ENCODE measurements at regions of chr19 and their contacts with region 1.

Region 1: DNA sequence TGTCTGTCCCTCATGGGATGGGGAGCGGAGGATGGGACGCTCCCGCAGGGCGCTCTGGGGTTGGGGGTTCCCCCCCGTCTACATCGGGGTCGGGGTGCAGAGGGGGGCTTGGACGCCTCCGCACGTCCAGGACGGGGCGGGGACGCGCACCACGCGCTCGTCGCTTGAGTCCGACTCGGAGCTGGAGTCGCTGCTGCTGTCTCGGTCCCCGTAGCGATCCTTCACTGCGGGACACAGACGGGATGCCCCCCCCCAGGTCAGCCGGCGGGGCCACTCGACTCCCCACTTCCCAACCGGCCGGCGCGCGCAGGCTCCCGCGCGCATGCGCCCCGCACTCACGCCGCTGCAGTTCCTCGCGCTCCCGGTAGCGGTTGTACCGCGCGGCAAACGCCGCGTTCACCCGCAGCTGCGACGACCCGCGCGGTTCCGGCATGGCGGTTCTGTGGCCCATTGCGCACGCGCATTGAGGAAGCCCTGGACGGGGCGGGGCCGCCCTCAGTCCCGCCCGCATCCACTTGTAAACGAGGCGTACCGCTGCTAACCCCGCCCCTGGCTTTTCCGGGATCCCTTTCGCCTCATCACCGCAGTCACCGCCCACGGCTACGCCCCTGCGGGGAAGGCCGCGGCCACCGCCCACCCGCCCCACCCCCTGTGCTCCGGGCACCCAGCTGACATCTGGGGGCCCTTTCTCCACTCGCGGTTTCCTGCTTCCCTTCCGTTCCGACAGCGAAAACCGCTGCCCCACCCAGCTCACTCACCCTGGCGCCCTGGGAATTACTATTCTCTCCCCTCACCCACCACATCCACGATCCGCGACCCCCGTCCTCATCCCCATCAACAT is at the start of gene KRI1:
- DNase-seq: peak; percentile 97 to 100 (median 99)
- ATAC-seq: peak; percentile 75
- H3K4me3 ChIP-seq: peak within 1 kb of the TSS; percentile 84
- H3K4me3 Mint-ChIP-seq: peak within 1 kb of the TSS; percentile 92 to 100 (median 97)
- H3K27ac ChIP-seq: peak within 1 kb of the TSS; percentile 92
- H3K27ac Mint-ChIP-seq: peak within 1 kb of the TSS; percentile 94 to 99 (median 96)
- H3K4me1 ChIP-seq: peaks cover 26 to 28% of the 10 kb centered on the region in 2 donors
- H3K4me1 Mint-ChIP-seq: peaks cover 28 to 56% (median 45%) of the 10 kb centered on the region in 7 donors
- H3K27me3 ChIP-seq: no peaks in the 10 kb centered on the region
- H3K27me3 Mint-ChIP-seq: peaks cover 0 to 5% (median 0%) of the 10 kb centered on the region in 5 donors
- total RNA-seq, gene KRI1: 48.4 to 84.1 (median 60.4) TPM

Region 2: GRCh38 chr19:10269333-10270179 is 296.2 kb before region 1 on chr19:
- CTCF ChIA-PET with region 1: no interaction called
- POLR2A ChIA-PET with region 1: no interaction called
- intact Hi-C with region 1: loop called in 1 of 2 experiments (anchors 5 kb)
- DNase-seq: peak; percentile 69 to 92 (median 85)
- ATAC-seq: peak; percentile 68
- H3K4me3 ChIP-seq: peak overlapping the region; percentile 78
- H3K4me3 Mint-ChIP-seq: peak overlapping the region; percentile 80 to 88 (median 86)
- H3K27ac ChIP-seq: peak overlapping the region; percentile 75
- H3K27ac Mint-ChIP-seq: peak overlapping the region; percentile 79 to 96 (median 88)
- H3K4me1 ChIP-seq: peaks cover 7 to 13% of the 10 kb centered on the region in 2 donors
- H3K4me1 Mint-ChIP-seq: peaks cover 8 to 39% (median 23%) of the 10 kb centered on the region in 7 donors
- H3K27me3 ChIP-seq: no peaks in the 10 kb centered on the region
- H3K27me3 Mint-ChIP-seq: no peaks in the 10 kb centered on the region

Region 3: DNA sequence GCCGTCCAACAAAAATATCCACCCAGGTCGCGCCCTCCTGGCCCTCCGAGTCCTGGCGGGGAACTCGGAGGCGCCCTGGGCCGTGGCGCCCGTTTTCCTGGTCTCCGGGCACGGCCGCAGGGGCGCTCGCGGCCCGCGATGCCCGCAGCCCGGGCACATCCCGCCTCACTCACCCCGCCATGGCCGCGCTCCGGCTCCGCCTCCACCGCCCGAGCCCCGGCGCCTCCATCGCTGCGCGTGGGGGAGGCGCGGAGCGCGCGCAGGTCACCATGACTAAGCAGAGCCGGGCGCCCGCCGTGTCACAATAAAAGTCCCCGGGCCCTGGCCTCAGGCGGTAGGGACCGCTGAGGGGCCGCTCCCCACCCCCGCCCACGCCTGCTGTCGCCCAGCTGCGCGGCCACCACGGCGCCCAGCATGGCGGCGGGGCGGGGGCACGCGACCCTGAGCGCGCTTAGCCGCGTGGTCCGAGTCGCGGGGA is 63.2 kb before region 1 on chr19:
- CTCF ChIA-PET with region 1: interaction called, 4 read pairs
- POLR2A ChIA-PET with region 1: interaction called, 6 read pairs
- intact Hi-C with region 1: loop called in 1 of 2 experiments (anchors 1 kb)
- DNase-seq: peak; percentile 71 to 95 (median 81)
- ATAC-seq: peak; percentile 94
- H3K4me3 ChIP-seq: peak overlapping the region; percentile 88
- H3K4me3 Mint-ChIP-seq: peak overlapping the region; percentile 72 to 96 (median 86)
- H3K27ac ChIP-seq: peak overlapping the region; percentile 83
- H3K27ac Mint-ChIP-seq: peak overlapping the region in 8 of 9 donors; percentile 69 to 91 (median 78)
- H3K4me1 ChIP-seq: peaks cover under 1 to 8% of the 10 kb centered on the region in 2 donors
- H3K4me1 Mint-ChIP-seq: peaks cover 22 to 42% (median 36%) of the 10 kb centered on the region in 7 donors
- H3K27me3 ChIP-seq: no peaks in the 10 kb centered on the region
- H3K27me3 Mint-ChIP-seq: peaks cover 0 to 3% (median 0%) of the 10 kb centered on the region in 5 donors

Region 4: DNA sequence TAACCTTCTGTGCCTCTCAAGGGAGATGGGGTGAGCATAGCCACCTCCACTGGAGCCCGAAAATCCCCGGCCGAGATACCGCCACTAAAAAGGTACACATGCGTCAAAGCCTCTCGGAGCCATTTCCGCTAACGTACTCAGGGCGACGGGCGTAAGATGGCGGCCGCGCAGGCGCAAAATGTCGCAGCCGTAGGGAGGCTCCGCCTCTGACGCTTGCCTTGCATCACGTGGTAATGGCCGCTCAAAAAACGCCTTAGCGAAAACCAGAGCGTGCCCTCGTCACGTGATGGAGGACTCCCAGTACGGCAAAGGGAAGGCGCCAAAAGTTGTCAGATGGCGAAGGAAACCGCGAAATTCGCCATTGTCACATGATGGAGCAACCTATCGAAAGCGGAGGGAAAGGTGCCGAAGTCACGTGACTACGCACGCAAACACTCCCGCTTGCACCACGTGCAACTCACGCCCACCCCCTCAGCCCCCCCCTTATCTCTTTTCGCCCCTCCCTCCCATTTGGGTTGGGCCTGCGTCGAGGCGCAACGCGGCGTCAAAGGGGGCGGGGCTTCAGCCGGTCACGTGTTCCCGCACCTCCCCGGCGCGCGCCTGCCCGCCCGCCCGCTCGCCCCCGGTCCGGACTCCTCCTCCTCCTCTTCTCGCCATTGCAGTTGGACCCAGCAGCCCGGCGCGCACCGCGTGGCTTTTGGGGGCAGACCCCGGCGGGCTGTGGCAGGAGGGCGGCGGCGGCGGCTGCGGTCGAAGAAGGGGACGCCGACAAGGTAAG is 88.1 kb after region 1 on chr19 and contains the start of gene ILF3:
- CTCF ChIA-PET with region 1: no interaction called
- POLR2A ChIA-PET with region 1: interaction called, 4 read pairs
- intact Hi-C with region 1: loop called (anchors 1 kb)
- DNase-seq: peak; percentile 97 to 100 (median 100)
- ATAC-seq: peak; percentile 89
- H3K4me3 ChIP-seq: peak within 1 kb of the TSS; percentile 87
- H3K4me3 Mint-ChIP-seq: peak within 1 kb of the TSS; percentile 93 to 98 (median 95)
- H3K27ac ChIP-seq: peak within 1 kb of the TSS; percentile 100
- H3K27ac Mint-ChIP-seq: peak within 1 kb of the TSS; percentile 94 to 99 (median 98)
- H3K4me1 ChIP-seq: peaks cover 32 to 38% of the 10 kb centered on the region in 2 donors
- H3K4me1 Mint-ChIP-seq: peaks cover 17 to 61% (median 42%) of the 10 kb centered on the region in 7 donors
- H3K27me3 ChIP-seq: no peaks in the 10 kb centered on the region
- H3K27me3 Mint-ChIP-seq: peaks cover 0 to 3% (median 0%) of the 10 kb centered on the region in 5 donors
- total RNA-seq, gene ILF3: 346 to 515 (median 368) TPM

Region 5: GRCh38 chr19:10835754-10836477 is 270.1 kb after region 1 on chr19 and contains the start of gene TMED1:
- CTCF ChIA-PET with region 1: no interaction called
- POLR2A ChIA-PET with region 1: no interaction called
- intact Hi-C with region 1: loop called (anchors 1 to 2 kb)
- DNase-seq: peak; percentile 81 to 97 (median 93)
- ATAC-seq: peak; percentile 92
- H3K4me3 ChIP-seq: peak within 1 kb of the TSS; percentile 98
- H3K4me3 Mint-ChIP-seq: peak within 1 kb of the TSS; percentile 82 to 99 (median 96)
- H3K27ac ChIP-seq: peak within 1 kb of the TSS; percentile 93
- H3K27ac Mint-ChIP-seq: peak within 1 kb of the TSS; percentile 98 to 100 (median 99)
- H3K4me1 ChIP-seq: peaks cover 8 to 13% of the 10 kb centered on the region in 2 donors
- H3K4me1 Mint-ChIP-seq: peaks cover 12 to 20% (median 15%) of the 10 kb centered on the region in 7 donors
- H3K27me3 ChIP-seq: no peaks in the 10 kb centered on the region
- H3K27me3 Mint-ChIP-seq: no peaks in the 10 kb centered on the region
- total RNA-seq, gene TMED1: 7.6 to 12.8 (median 9.9) TPM

Region 6: DNA sequence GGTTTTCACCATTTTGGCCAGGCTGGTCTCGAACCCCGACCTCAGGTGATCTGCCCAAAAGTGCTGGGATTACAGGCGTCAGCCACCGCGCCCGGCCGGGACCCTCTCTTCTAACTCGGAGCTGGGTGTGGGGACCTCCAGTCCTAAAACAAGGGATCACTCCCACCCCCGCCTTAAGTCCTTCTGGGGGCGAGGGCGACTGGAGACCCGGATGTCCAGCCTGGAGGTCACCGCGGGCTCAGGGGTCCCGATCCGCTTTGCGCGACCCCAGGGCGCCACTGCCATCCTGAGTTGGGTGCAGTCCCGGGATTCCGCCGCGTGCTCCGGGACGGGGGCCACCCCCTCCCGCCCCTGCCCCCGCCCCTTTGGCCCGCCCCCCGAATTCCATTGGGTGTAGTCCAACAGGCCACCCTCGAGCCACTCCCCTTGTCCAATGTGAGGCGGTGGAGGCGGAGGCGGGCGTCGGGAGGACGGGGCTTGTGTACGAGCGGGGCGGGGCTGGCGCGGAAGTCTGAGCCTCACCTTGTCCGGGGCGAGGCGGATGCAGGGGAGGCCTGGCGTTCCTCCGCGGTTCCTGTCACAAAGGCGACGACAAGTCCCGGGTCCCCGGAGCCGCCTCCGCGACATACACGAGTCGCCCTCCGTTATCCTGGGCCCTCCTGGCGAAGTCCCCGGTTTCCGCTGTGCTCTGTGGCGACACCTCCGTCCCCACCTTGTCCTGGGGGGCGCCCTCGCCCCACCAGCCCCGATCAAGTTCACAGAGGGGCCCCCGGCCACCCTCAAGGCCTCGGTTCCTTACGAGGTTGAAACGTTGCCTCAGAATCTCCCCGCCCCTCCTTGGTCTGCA is 524.5 kb after region 1 on chr19:
- CTCF ChIA-PET with region 1: no interaction called
- POLR2A ChIA-PET with region 1: no interaction called
- intact Hi-C with region 1: loop called in 1 of 2 experiments (anchors 2 kb)
- DNase-seq: peak; percentile 89 to 97 (median 96)
- ATAC-seq: peak; percentile 90
- H3K4me3 ChIP-seq: peak overlapping the region; percentile 83
- H3K4me3 Mint-ChIP-seq: peak overlapping the region; percentile 85 to 94 (median 89)
- H3K27ac ChIP-seq: peak overlapping the region; percentile 91
- H3K27ac Mint-ChIP-seq: peak overlapping the region; percentile 88 to 99 (median 96)
- H3K4me1 ChIP-seq: peaks cover 24 to 41% of the 10 kb centered on the region in 2 donors
- H3K4me1 Mint-ChIP-seq: peaks cover 13 to 51% (median 44%) of the 10 kb centered on the region in 7 donors
- H3K27me3 ChIP-seq: no peaks in the 10 kb centered on the region
- H3K27me3 Mint-ChIP-seq: peaks cover 0 to 2% (median 0%) of the 10 kb centered on the region in 5 donors